Activated T-helper 1 cell treated with anti-CD3 and anti-CD28 coated beads, Interleukin-12 subunit alpha, Interleukin-12 subunit beta, Interleukin-2, Interleukin-4 antibody, amounts not matched to agents 30 ng/mL and 10 ng/mL and 1 ng/mL, durations not matched to agents 14 hours and 24 hours and 36 hours (primary cell): ENCODE measurements at regions of chr1 and their contacts with region 1.

Region 1: DNA sequence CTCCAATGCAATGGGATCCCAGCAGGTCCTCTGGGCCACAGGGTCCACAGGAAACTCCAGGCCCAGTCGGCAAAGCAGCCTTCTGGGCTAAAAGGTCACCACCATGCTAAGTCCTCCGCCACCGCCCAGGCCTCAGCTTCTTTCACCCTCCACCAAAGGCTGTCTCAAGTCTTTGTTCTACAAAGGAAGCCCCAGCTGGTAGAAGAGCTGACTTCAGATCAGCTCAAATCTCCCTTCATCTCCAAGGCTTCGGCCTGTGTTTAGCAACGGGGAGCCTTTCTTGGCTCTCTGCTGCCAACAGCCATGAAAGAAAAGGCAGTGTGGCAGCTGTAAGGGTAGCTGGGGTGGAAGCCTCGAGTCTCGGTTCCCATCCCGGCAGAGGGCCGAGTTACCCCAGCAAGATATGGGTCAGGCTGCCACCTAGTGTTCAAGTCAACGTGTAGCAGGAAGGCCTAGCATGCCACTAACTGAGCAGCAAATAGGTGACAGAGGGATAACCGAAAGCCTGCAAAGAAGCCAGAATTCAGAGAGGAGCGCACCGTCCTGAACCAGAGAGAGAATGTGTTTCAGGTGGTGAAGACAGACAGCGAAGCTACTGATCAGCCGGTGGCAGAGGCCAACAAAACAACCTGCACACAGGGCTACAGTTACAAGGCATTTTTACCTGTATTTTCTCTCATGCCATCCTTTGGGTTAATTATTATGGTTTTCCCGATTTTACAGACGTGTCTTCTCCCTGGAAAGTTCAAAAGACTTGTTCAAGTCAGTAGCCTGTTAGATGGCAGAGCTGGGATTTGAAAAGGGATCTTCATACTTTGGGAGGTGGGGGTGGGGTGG is 26.8 kb upstream of the CRNN start:
- DNase-seq: peak; percentile 36
- H3K4me3 Mint-ChIP-seq: no peak overlapping the region
- H3K27ac Mint-ChIP-seq: no peak overlapping the region
- H3K4me1 Mint-ChIP-seq: peaks cover 4% of the 10 kb centered on the region
- H3K27me3 Mint-ChIP-seq: peaks cover 20% of the 10 kb centered on the region

Region 2: DNA sequence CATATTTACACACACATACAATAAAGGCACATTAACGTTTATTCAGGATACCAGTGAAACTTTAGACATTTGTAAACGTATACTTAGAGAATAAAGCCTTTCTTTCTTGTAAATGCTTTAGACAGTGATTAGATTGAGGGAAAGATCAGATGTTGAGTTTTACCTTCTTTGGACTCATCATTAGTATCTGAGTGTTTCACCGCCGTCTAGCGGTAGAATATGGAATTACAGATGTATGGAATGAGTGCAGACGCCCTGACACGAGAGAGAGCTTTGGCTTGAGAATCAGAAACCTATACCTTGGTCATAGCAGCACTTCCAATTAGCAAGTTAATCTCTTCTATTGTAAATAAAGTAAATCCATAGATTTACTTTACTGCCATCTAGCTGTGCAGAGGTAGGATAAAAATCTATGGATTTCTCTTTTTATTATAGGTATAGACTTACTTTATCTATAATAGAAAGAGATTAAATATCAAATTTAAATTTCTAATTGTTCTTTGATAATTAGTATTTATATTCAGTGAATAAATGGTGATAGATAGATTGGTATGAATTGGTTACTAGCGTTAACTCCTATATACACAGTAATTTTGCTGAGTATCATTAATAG is 93.6 kb before region 1 on chr1:
- intact Hi-C with region 1: loop called (anchors 5 kb)
- DNase-seq: peak; percentile 21
- H3K4me3 Mint-ChIP-seq: no peak overlapping the region
- H3K27ac Mint-ChIP-seq: no peak overlapping the region
- H3K4me1 Mint-ChIP-seq: no peaks in the 10 kb centered on the region
- H3K27me3 Mint-ChIP-seq: peaks cover 18% of the 10 kb centered on the region

Region 3: GRCh38 chr1:152451254-152451653 is 10.4 kb after region 1 on chr1:
- intact Hi-C with region 1: no loop called
- DNase-seq: no peak
- H3K4me3 Mint-ChIP-seq: no peak overlapping the region
- H3K27ac Mint-ChIP-seq: no peak overlapping the region
- H3K4me1 Mint-ChIP-seq: no peaks in the 10 kb centered on the region
- H3K27me3 Mint-ChIP-seq: peaks cover 26% of the 10 kb centered on the region

Region 4: DNA sequence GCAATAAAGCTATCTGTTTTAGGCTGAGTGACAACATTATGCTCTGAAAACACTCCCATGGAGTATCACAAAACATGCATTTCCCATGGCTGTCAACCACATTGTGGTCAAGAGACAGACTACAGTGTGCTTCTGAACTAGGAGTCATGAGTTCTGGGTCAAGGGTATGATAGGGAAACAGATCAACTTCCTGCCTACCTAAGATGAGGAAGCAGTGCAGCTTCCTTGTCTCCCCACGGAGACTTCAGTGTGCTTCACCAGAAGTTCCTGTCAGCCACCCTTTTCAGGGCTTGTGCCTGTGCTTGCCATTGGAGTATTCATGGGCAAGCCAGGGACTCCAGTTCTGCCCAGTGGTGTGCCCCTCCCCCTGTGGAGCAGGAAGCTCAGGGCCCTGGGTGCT is 105.9 kb after region 1 on chr1:
- intact Hi-C with region 1: no loop called
- DNase-seq: no peak
- H3K4me3 Mint-ChIP-seq: no peak overlapping the region
- H3K27ac Mint-ChIP-seq: no peak overlapping the region
- H3K4me1 Mint-ChIP-seq: no peaks in the 10 kb centered on the region
- H3K27me3 Mint-ChIP-seq: peaks cover 4% of the 10 kb centered on the region